ENCODE measurements at regions of chr20 and their contacts with region 1.

Region 1: GRCh38 chr20:3854462-3854871 is 7.8 kb downstream of the MAVS start:
- DNase-seq: no peak
- H3K4me3 Mint-ChIP-seq: no peak overlapping the region
- H3K27ac Mint-ChIP-seq: peak overlapping the region; percentile 23
- H3K4me1 Mint-ChIP-seq: peaks cover 2% of the 10 kb centered on the region
- H3K27me3 Mint-ChIP-seq: no peaks in the 10 kb centered on the region

Region 2: GRCh38 chr20:3080939-3081388 is 773.5 kb before region 1 on chr20:
- CTCF ChIA-PET with region 1: no interaction called
- POLR2A ChIA-PET with region 1: no interaction called
- intact Hi-C with region 1: no loop called
- DNase-seq: no peak
- H3K4me3 Mint-ChIP-seq: no peak overlapping the region
- H3K27ac Mint-ChIP-seq: no peak overlapping the region
- H3K4me1 Mint-ChIP-seq: peaks cover 24% of the 10 kb centered on the region
- H3K27me3 Mint-ChIP-seq: peaks cover 39% of the 10 kb centered on the region

Region 3: DNA sequence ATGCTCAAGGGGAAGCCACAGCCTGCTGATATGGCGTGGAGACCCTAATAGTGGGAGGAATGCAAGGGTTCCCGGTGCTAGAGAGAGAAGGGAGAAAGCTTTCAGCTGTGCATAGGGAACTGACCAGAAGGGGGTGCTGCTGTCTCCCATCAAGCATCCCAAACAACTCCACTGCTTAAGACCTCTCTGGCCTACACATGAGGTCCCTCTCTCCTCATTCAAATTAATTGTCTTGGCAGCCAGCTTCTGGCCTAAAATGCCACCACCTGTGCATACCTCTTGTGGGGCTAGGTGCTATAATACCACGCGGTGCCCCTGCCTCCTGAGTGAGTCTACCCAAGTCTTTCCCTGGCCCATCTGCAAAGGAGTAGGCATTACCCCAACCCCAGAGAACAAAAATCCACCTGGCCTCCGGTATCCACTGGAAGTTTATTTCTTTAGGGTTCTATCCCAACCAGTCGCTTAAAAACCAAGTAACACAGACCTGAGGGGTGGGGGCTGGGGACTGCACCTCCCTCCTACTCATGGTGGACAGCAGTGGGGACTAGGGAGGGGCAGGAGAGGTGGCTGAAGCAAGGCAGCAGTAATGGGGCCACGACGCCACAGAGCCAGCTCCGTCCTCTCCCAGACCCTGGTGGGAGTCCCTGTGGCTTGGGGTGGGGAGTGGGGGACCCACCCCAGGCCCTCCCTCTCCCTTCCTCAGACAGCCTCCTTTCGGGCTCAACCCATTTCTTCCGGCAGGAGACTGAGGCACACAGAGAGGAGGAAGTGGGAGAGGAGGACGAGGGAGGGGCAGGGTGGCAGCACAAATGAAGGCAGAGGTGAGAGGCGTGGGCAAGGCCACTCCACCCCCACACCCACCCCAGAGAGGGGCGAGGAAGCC is 101.1 kb before region 1 on chr20:
- CTCF ChIA-PET with region 1: interaction called, 26 read pairs
- POLR2A ChIA-PET with region 1: no interaction called
- intact Hi-C with region 1: loop called (anchors 1 kb)
- DNase-seq: peak; percentile 75
- H3K4me3 Mint-ChIP-seq: no peak overlapping the region
- H3K27ac Mint-ChIP-seq: peak overlapping the region; percentile 58
- H3K4me1 Mint-ChIP-seq: peaks cover 6% of the 10 kb centered on the region
- H3K27me3 Mint-ChIP-seq: no peaks in the 10 kb centered on the region

Region 4: GRCh38 chr20:3786665-3787323 is 67.7 kb before region 1 on chr20 and contains the start of gene CENPB:
- CTCF ChIA-PET with region 1: interaction called, 30 read pairs
- POLR2A ChIA-PET with region 1: interaction called, 3 read pairs
- intact Hi-C with region 1: loop called (anchors 1 kb)
- DNase-seq: peak; percentile 93
- H3K4me3 Mint-ChIP-seq: peak within 1 kb of the TSS; percentile 83
- H3K27ac Mint-ChIP-seq: peak within 1 kb of the TSS; percentile 79
- H3K4me1 Mint-ChIP-seq: peaks cover 38% of the 10 kb centered on the region
- H3K27me3 Mint-ChIP-seq: no peaks in the 10 kb centered on the region
- total RNA-seq, gene CENPB: 50.1 to 51.9 TPM

Region 5: DNA sequence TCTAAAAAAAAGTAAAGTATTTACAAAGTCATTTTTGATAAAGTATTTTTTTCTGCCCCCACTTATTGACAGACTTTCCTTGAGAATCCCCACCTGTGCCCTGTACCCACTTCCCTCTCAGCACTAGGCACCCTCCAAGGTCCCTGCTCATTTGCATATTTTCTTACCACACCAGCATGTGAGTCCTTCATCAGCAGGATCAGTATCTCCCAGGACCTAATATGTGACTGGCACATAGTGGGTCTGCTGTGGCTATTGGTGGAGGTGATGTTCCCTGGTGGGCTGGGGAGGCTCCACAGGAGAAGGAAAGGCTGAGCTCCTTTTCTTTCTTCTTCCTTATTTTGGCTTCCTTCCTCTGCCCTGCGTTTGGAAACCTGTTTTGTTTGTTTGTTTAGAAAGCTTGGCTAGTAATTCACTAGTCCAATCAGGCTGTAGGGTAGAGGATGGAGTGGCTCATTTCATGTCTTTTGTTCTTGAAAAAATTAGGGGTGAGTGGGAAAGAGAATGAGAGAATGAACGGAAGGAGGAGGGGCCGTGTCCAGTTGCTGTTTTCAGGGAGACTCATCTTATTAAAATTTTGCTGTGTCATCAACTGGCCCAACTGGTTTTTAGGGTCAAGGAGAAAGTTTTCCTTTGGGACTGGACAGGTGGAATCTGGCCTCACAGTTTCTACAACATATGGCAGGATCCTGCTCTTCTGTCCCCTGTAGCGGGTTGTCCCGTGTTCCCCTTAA is 163.7 kb after region 1 on chr20:
- CTCF ChIA-PET with region 1: no interaction called
- POLR2A ChIA-PET with region 1: no interaction called
- intact Hi-C with region 1: no loop called
- DNase-seq: no peak
- H3K4me3 Mint-ChIP-seq: no peak overlapping the region
- H3K27ac Mint-ChIP-seq: no peak overlapping the region
- H3K4me1 Mint-ChIP-seq: peaks cover 25% of the 10 kb centered on the region
- H3K27me3 Mint-ChIP-seq: peaks cover 4% of the 10 kb centered on the region

Region 6: GRCh38 chr20:4067600-4068261 is 213.3 kb after region 1 on chr20:
- CTCF ChIA-PET with region 1: interaction called, 14 read pairs
- POLR2A ChIA-PET with region 1: no interaction called
- intact Hi-C with region 1: no loop called
- DNase-seq: no peak
- H3K4me3 Mint-ChIP-seq: no peak overlapping the region
- H3K27ac Mint-ChIP-seq: no peak overlapping the region
- H3K4me1 Mint-ChIP-seq: peaks cover 2% of the 10 kb centered on the region
- H3K27me3 Mint-ChIP-seq: no peaks in the 10 kb centered on the region

Measured in activated CD4-positive, alpha-beta memory T cell treated with anti-CD3 and anti-CD28 coated beads for 36 hours (primary cell).